ENCODE measurements at regions of chr4 and their contacts with region 1.

Region 1: GRCh38 chr4:26410385-26411293 is 79.6 kb downstream of the CCKAR start:
- DNase-seq: peak; percentile 65
- ATAC-seq: peak; percentile 67
- H3K4me3 Mint-ChIP-seq: no peak overlapping the region
- H3K27ac Mint-ChIP-seq: no peak overlapping the region
- H3K4me1 Mint-ChIP-seq: peaks cover 5% of the 10 kb centered on the region
- H3K27me3 Mint-ChIP-seq: no peaks in the 10 kb centered on the region

Region 2: GRCh38 chr4:25817059-25817681 is 593.5 kb before region 1 on chr4:
- CTCF ChIA-PET with region 1: no interaction called
- POLR2A ChIA-PET with region 1: no interaction called
- DNase-seq: no peak
- ATAC-seq: no peak
- H3K4me3 Mint-ChIP-seq: no peak overlapping the region
- H3K27ac Mint-ChIP-seq: no peak overlapping the region
- H3K4me1 Mint-ChIP-seq: no peaks in the 10 kb centered on the region
- H3K27me3 Mint-ChIP-seq: no peaks in the 10 kb centered on the region

Region 3: DNA sequence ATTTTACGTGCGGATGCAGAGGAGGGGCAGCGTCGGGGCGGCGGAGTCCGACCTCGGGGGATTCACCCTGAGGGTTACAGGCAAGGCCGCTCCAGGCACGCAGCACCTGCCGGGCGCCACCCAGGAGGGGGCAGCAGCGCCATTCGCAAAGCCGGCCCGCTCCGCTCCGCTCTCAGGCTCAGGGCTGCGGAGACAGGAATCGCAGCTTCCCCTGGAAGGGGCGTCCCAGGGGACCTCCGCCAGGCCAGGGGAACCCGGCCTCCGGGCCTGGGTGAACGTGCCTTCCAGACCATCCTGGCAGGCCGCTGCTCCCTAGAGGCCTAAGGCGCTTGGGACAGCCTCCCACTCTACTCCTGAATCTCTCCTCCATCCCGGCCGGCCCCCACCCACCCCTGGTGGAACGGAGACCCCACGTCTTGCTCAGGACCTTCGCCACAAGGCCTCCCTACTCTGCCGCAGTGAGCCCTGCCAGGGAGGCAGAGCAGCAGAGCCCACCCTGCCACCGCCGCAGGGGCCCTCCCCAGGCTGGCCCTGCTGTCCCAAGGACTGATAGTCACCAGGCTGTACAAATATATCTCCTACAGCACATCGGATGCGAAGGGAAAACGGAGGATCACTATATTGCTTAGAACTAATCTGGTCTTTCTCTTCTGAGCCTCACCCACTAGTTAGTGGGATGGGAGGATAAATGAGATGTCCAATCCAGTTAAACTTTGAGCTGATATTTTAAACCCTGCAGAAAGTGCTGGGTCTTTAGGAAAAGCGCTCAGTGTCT is 381.7 kb before region 1 on chr4:
- CTCF ChIA-PET with region 1: interaction called, 34 read pairs
- POLR2A ChIA-PET with region 1: no interaction called
- DNase-seq: peak; percentile 75
- ATAC-seq: peak; percentile 94
- H3K4me3 Mint-ChIP-seq: no peak overlapping the region
- H3K27ac Mint-ChIP-seq: no peak overlapping the region
- H3K4me1 Mint-ChIP-seq: peaks cover 2% of the 10 kb centered on the region
- H3K27me3 Mint-ChIP-seq: peaks cover 2% of the 10 kb centered on the region

Region 4: GRCh38 chr4:26061248-26061986 is 349.2 kb before region 1 on chr4:
- CTCF ChIA-PET with region 1: interaction called, 15 read pairs
- POLR2A ChIA-PET with region 1: no interaction called
- DNase-seq: peak; percentile 51
- ATAC-seq: peak; percentile 78
- H3K4me3 Mint-ChIP-seq: no peak overlapping the region
- H3K27ac Mint-ChIP-seq: no peak overlapping the region
- H3K4me1 Mint-ChIP-seq: peaks cover 10% of the 10 kb centered on the region
- H3K27me3 Mint-ChIP-seq: peaks cover 7% of the 10 kb centered on the region